WTC11 (cell line): ENCODE measurements at regions of chr1 and their contacts with region 1.

Region 1: DNA sequence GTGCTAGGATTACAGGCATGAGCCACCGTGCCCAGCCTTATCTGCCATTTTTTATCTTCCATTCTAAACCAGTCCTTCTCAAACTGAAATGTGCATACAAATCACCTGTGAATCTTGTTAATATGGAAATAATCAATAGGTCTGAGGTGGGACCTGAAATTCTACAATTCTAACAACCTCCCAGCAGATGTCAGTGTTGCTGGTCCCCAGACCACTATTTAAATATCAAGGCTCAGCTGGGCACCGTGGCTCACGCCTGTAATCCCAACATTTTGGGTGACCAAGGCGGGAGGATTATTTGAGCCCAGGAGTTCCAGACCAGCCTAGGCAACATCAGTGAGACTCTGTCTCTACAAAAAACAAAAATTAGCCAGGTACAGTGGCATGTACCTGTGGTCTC is 4.1 kb downstream of the UQCRHL start:
- DNase-seq: peak; percentile 36
- ATAC-seq: peak; percentile 54
- H3K4me3 Mint-ChIP-seq: no peak overlapping the region
- H3K27ac Mint-ChIP-seq: no peak overlapping the region
- H3K4me1 Mint-ChIP-seq: peaks cover 19% of the 10 kb centered on the region
- H3K27me3 Mint-ChIP-seq: no peaks in the 10 kb centered on the region; the same call in 1 of the 2 replicates
- CTCF ChIP-seq: no peak; the same call in 1 of the 2 replicates

Region 2: DNA sequence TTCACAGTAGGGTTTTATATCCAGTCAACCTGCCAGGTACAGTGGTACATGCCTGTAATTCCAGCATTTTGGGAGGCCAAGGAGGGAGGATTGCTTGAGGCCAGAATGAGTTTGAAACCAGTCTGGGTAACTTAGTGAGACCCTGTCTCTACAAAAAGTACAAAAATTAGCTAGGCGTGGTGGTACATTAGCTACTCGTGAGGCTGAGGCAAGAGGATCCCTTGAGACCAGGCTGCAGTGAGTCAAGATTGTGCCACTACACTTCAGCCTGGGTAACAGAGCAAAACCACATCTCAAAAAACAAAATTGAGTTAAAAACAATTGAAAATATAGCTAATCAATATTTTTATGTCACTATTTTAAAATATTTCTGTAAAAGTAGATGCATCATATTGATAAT is 152.9 kb before region 1 on chr1:
- CTCF ChIA-PET with region 1: no interaction called
- POLR2A ChIA-PET with region 1: no interaction called
- DNase-seq: no peak
- ATAC-seq: no peak
- H3K4me3 Mint-ChIP-seq: no peak overlapping the region
- H3K27ac Mint-ChIP-seq: no peak overlapping the region
- H3K4me1 Mint-ChIP-seq: no peaks in the 10 kb centered on the region
- H3K27me3 Mint-ChIP-seq: no peaks in the 10 kb centered on the region
- CTCF ChIP-seq: no peak

Region 3: DNA sequence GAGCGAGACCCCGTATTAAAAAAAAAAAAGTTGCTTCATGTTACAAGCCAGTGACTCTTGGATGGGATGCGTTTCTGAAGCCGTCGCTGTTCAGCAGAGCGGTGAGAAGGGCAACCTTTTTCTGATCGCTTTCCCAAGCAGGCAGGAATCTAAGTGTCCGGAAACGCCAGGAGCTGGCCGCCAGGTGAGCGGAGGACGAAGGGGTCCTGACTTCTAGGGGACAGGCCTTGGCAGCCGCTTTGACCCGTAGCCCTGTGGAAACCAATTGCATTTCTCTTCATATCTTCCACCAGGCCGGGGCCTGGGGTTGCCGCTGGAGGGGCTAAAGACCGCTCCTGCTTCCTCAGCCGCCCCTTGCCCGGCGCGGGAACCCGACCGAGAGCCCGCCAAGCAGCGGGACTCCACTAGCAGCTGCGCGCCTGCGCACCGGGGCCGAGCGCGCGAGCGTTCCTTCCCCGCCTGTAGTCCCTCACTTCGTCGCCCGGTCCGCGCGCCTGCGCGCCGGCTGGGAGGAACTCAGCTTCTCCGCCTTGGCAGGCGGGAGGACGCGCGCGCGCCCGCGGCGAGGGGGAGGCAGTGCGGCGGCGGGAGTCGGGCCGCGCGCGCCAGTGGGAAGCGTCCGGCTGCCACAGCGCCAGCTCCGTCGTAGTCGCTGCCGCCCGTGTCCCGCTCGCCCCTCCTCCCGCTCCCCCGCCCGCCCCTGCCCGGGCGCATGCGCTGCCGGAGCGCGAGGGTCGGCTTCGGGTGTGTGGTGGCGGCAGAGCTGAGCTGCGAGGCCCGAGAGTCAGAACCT is 43.9 kb after region 1 on chr1 and contains the start of gene SPEN:
- CTCF ChIA-PET with region 1: interaction called, 8 read pairs
- POLR2A ChIA-PET with region 1: interaction called, 10 read pairs
- DNase-seq: peak; percentile 95
- ATAC-seq: peak; percentile 73
- H3K4me3 Mint-ChIP-seq: peak within 1 kb of the TSS; percentile 92
- H3K27ac Mint-ChIP-seq: peak within 1 kb of the TSS; percentile 100
- H3K4me1 Mint-ChIP-seq: peaks cover 29% of the 10 kb centered on the region
- H3K27me3 Mint-ChIP-seq: peaks cover 5% of the 10 kb centered on the region; the same call in 1 of the 2 replicates
- CTCF ChIP-seq: no peak
- total RNA-seq, gene SPEN: 48.5 to 50.2 TPM (median 48.8 TPM) in 3 replicates

Region 4: GRCh38 chr1:15937706-15938168 is 134.4 kb after region 1 on chr1:
- CTCF ChIA-PET with region 1: interaction called, 16 read pairs
- POLR2A ChIA-PET with region 1: no interaction called
- DNase-seq: peak; percentile 56
- ATAC-seq: peak; percentile 85
- H3K4me3 Mint-ChIP-seq: no peak overlapping the region
- H3K27ac Mint-ChIP-seq: peak overlapping the region; percentile 81
- H3K4me1 Mint-ChIP-seq: peaks cover 6% of the 10 kb centered on the region
- H3K27me3 Mint-ChIP-seq: no peaks in the 10 kb centered on the region
- CTCF ChIP-seq: no peak